ENCODE measurements at regions of chr13 and their contacts with region 1.

Region 1: GRCh38 chr13:26469602-26470001 is 87.9 kb upstream of the WASF3 start:
- DNase-seq: no peak
- H3K4me3 ChIP-seq: no peak overlapping the region
- H3K27ac ChIP-seq: no peak overlapping the region
- H3K4me1 ChIP-seq: peaks cover 0 to 4% (median 0%) of the 10 kb centered on the region in 4 donors
- H3K27me3 ChIP-seq: no peaks in the 10 kb centered on the region
- CTCF ChIP-seq: no peak

Region 2: DNA sequence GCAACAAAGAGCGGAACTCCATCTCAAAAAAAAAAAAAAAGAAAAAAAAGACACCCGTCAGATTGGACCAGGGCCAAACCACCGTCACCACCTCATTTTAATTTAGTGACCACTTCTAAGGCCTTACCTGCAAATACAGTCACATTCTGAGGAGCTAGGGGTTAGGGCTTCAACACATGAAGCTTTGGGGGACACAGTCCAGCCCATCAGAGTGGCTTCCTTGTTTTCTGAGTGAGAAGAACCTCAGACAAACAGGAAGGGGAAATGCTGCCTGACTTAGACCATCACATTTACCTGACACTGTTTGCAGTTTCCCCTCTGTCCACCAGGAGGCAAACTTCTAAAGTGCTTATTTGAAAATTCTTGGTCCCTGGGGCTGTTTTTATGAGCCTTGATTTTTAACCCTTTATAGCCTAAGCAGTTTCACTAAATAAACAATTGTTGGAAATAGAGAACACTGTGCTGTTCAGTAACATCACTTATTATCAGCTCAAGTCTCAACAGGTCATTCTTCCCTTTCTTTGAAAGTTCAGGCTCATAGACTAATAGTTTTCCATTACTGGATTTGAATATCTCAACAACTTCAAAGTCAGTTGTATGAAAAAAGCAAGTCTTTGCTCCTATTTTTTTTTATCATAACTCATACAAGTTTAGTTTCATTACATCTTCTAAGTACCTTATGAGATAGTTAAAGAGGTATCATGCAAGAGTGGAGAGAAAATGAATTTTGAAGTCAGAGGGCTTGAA is 13.0 kb after region 1 on chr13:
- intact Hi-C with region 1: no loop called
- DNase-seq: peak in 1 of 2 donors; percentile 65
- H3K4me3 ChIP-seq: no peak overlapping the region
- H3K27ac ChIP-seq: no peak overlapping the region
- H3K4me1 ChIP-seq: no peaks in the 10 kb centered on the region
- H3K27me3 ChIP-seq: no peaks in the 10 kb centered on the region
- CTCF ChIP-seq: peak; percentile 74 to 76

Region 3: GRCh38 chr13:27130979-27131623 is 661.5 kb after region 1 on chr13:
- intact Hi-C with region 1: loop called (anchors 5 kb)
- DNase-seq: no peak
- H3K4me3 ChIP-seq: no peak overlapping the region
- H3K27ac ChIP-seq: peak overlapping the region; percentile 8 to 29
- H3K4me1 ChIP-seq: peaks cover 0 to 94% (median 15%) of the 10 kb centered on the region in 4 donors
- H3K27me3 ChIP-seq: no peaks in the 10 kb centered on the region
- CTCF ChIP-seq: no peak